CD14-positive monocyte (primary cell): ENCODE measurements at regions of chr14 and their contacts with region 1.

Region 1: DNA sequence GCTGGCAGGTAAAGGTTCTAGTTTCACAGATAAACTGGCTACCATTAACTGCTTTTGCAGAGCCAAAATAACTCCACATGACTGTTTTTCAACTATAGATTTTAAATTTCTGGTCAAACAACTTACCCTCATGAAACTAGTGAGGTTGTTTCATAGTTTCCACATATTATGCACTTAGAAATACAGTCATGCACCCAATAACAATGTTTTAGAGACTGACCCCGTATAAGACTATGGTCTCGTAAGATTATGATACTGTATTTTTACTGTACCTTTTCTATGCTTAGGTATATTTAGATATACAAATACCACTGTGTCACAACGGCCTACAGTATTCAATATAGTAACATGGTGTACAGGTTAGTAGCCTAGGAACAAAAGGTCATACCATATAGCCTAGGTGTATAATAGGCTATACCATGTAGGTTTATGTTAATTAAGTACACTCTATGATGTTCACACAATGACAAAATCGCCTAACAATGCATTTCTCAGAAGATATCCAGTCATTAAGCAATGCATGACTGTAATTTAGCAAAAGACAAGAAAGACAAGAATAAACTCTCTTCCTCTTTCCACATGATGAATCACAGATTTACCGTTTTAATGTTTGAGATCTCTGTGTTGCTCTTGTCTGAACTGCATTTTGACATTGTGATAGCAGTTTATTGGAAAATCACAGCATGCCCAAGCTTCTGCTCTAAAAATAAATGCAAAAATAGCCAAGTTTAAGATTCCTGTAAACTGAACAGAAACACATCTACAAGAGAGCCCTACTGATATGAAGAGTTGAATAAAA is 17.1 kb downstream of the DICER1 start:
- DNase-seq: peak; percentile 69 to 90 (median 84)
- H3K4me3 ChIP-seq: peak overlapping the region in 1 of 3 experiments; percentile 1
- H3K4me3 Mint-ChIP-seq: peak overlapping the region in 1 of 2 donors; percentile 86
- H3K27ac ChIP-seq: peak overlapping the region in 1 of 2 donors; percentile 70
- H3K27ac Mint-ChIP-seq: peak overlapping the region; percentile 90 to 97 (median 96)
- H3K4me1 ChIP-seq: peaks cover 37 to 58% of the 10 kb centered on the region in 2 donors
- H3K4me1 Mint-ChIP-seq: peaks cover 47% of the 10 kb centered on the region
- H3K27me3 ChIP-seq: no peaks in the 10 kb centered on the region
- H3K27me3 Mint-ChIP-seq: peaks cover 0 to 3% (median 0%) of the 10 kb centered on the region in 3 donors
- CTCF ChIP-seq: no peak

Region 2: GRCh38 chr14:95185033-95185766 is 44.9 kb after region 1 on chr14:
- intact Hi-C with region 1: loop called in 1 of 2 experiments (anchors 5 kb)
- DNase-seq: peak; percentile 88 to 94 (median 91)
- H3K4me3 ChIP-seq: peak overlapping the region; percentile 53 to 83 (median 72)
- H3K4me3 Mint-ChIP-seq: peak overlapping the region; percentile 84 to 99
- H3K27ac ChIP-seq: peak overlapping the region; percentile 92 to 96
- H3K27ac Mint-ChIP-seq: peak overlapping the region; percentile 97 to 100 (median 99)
- H3K4me1 ChIP-seq: peaks cover 63 to 74% of the 10 kb centered on the region in 2 donors
- H3K4me1 Mint-ChIP-seq: peaks cover 70% of the 10 kb centered on the region
- H3K27me3 ChIP-seq: no peaks in the 10 kb centered on the region
- H3K27me3 Mint-ChIP-seq: peaks cover 0 to 2% (median 1%) of the 10 kb centered on the region in 3 donors
- CTCF ChIP-seq: no peak